B cell (primary cell): ENCODE measurements at regions of chr20 and their contacts with region 1.

Region 1: DNA sequence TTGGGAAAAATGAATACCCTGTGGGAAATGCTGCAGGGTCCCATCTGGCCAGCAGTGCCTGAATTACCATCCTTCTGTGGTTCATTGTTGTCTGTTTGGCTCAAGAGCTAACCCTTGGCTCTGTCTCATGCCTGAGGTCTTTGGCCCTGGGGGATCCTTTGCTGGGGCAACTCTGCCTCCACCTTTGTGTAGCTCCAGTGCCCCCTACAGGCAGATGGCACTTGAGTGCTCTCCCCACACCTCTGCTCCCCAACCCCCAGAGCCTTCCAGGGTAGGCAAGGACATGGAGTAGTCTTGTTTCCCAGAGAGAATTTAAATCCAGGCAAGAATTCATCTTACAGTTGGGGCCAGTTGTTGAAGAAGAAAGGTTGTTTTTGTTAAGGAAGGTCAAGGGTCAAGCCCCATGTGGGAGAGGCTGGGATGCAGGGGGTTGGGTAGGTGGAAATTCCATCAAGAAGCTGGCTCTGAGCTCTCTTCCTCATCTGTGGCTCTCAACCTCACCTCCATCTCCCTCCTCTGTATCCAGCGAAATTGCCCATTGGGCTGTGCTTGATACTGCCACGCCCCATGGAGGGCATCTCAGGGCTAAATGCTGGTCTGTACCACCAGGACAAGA is 44.2 kb downstream of the ZNF831 start:
- DNase-seq: peak; percentile 85
- ATAC-seq: peak; percentile 99
- H3K4me3 ChIP-seq: no peak overlapping the region
- H3K4me3 Mint-ChIP-seq: no peak overlapping the region
- H3K27ac ChIP-seq: no peak overlapping the region
- H3K27ac Mint-ChIP-seq: no peak overlapping the region
- H3K4me1 ChIP-seq: peaks cover 6 to 7% of the 10 kb centered on the region in 2 donors
- H3K4me1 Mint-ChIP-seq: peaks cover 7% of the 10 kb centered on the region
- H3K27me3 ChIP-seq: no peaks in the 10 kb centered on the region
- H3K27me3 Mint-ChIP-seq: no peaks in the 10 kb centered on the region
- CTCF ChIP-seq: peak; percentile 91

Region 2: DNA sequence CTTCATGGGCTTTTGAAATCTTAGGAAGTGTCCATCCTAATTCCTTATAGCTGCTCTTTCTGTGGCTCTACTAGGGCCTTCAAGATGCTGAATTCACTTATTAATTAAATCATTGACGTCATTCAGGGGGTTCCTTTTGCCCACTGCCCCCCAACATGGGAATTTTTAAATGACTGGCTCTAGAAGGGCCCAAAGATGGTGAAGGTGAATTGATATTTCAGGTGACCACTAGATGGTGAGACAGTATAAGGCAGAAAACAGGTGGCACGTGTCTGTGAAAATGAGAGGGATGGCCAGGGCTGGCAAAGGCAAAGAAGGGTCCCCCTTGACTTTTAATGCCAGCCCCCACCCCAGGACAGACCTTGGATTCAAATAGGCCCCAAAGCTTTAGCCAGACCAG is 343.5 kb before region 1 on chr20:
- CTCF ChIA-PET with region 1: interaction called, 58 read pairs
- POLR2A ChIA-PET with region 1: no interaction called
- intact Hi-C with region 1: loop called (anchors 1 kb)
- DNase-seq: peak; percentile 48
- ATAC-seq: no peak
- H3K4me3 ChIP-seq: no peak overlapping the region
- H3K4me3 Mint-ChIP-seq: no peak overlapping the region
- H3K27ac ChIP-seq: no peak overlapping the region
- H3K27ac Mint-ChIP-seq: no peak overlapping the region
- H3K4me1 ChIP-seq: peaks cover 0 to 2% of the 10 kb centered on the region in 2 donors
- H3K4me1 Mint-ChIP-seq: no peaks in the 10 kb centered on the region
- H3K27me3 ChIP-seq: peaks cover 0 to 10% (median 3%) of the 10 kb centered on the region in 4 experiments
- H3K27me3 Mint-ChIP-seq: peaks cover 22% of the 10 kb centered on the region
- CTCF ChIP-seq: peak; percentile 55

Region 3: DNA sequence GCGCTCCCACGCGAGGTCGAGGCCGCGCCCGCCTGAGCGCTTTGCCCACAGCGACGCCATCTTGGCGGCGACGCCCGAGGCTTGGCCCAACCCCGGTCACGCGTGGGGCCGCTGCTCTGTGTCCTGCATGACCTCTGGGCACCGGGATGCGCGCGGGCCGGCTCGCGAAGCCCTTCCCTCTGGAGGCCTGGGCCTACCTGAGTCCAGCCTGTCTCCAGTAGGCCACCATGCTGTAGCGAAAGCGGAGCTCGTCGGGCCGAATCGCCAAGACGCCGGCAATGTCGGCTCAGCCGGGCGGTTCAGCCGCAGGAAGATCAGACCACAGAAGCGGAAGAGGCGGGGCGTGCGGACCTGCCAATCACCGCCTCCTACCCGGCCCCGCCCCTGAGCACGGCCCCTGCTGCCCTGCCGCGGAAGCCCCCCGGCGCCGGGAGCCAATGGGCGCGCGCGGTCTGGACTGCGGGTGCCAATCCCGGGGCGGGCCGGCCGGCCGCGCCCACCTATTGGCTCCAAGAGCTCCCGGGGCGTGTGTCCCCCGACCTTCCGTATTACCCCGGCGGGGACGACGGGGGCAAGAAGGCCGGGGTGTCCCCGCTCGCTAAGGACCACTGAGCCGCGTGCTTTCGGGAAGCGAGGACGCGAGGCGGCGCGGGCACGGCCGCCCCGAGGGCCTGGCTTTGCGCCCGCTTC is 175.7 kb before region 1 on chr20 and contains the start of gene ATP5F1E:
- CTCF ChIA-PET with region 1: interaction called, 10 read pairs
- POLR2A ChIA-PET with region 1: no interaction called
- intact Hi-C with region 1: no loop called
- DNase-seq: peak; percentile 98
- ATAC-seq: peak; percentile 97
- H3K4me3 ChIP-seq: peak within 1 kb of the TSS; percentile 68 to 82 (median 80)
- H3K4me3 Mint-ChIP-seq: peak within 1 kb of the TSS; percentile 97
- H3K27ac ChIP-seq: peak within 1 kb of the TSS; percentile 84 to 91
- H3K27ac Mint-ChIP-seq: peak within 1 kb of the TSS; percentile 98
- H3K4me1 ChIP-seq: peaks cover 27 to 37% of the 10 kb centered on the region in 2 donors
- H3K4me1 Mint-ChIP-seq: peaks cover 45% of the 10 kb centered on the region
- H3K27me3 ChIP-seq: no peaks in the 10 kb centered on the region
- H3K27me3 Mint-ChIP-seq: no peaks in the 10 kb centered on the region
- CTCF ChIP-seq: no peak
- total RNA-seq, gene ATP5F1E: 51.0 and 55.0 TPM in 2 replicates

Region 4: GRCh38 chr20:59094576-59094975 is 113.3 kb before region 1 on chr20:
- CTCF ChIA-PET with region 1: interaction called, 435 read pairs
- POLR2A ChIA-PET with region 1: interaction called, 3 read pairs
- intact Hi-C with region 1: no loop called
- DNase-seq: no peak
- ATAC-seq: no peak
- H3K4me3 ChIP-seq: no peak overlapping the region
- H3K4me3 Mint-ChIP-seq: no peak overlapping the region
- H3K27ac ChIP-seq: no peak overlapping the region
- H3K27ac Mint-ChIP-seq: no peak overlapping the region
- H3K4me1 ChIP-seq: no peaks in the 10 kb centered on the region
- H3K4me1 Mint-ChIP-seq: peaks cover 9% of the 10 kb centered on the region
- H3K27me3 ChIP-seq: no peaks in the 10 kb centered on the region
- H3K27me3 Mint-ChIP-seq: no peaks in the 10 kb centered on the region
- CTCF ChIP-seq: no peak

Region 5: GRCh38 chr20:59120491-59120890 is 87.4 kb before region 1 on chr20:
- CTCF ChIA-PET with region 1: interaction called, 68 read pairs
- POLR2A ChIA-PET with region 1: no interaction called
- intact Hi-C with region 1: no loop called
- DNase-seq: peak; percentile 48
- ATAC-seq: no peak
- H3K4me3 ChIP-seq: no peak overlapping the region
- H3K4me3 Mint-ChIP-seq: peak overlapping the region; percentile 91
- H3K27ac ChIP-seq: no peak overlapping the region
- H3K27ac Mint-ChIP-seq: peak overlapping the region; percentile 98
- H3K4me1 ChIP-seq: peaks cover 58 to 60% of the 10 kb centered on the region in 2 donors
- H3K4me1 Mint-ChIP-seq: peaks cover 68% of the 10 kb centered on the region
- H3K27me3 ChIP-seq: no peaks in the 10 kb centered on the region
- H3K27me3 Mint-ChIP-seq: no peaks in the 10 kb centered on the region
- CTCF ChIP-seq: no peak

Region 6: GRCh38 chr20:59191756-59192532 is 15.9 kb before region 1 on chr20:
- CTCF ChIA-PET with region 1: interaction called, 15 read pairs
- POLR2A ChIA-PET with region 1: no interaction called
- intact Hi-C with region 1: no loop called
- DNase-seq: no peak
- ATAC-seq: no peak
- H3K4me3 ChIP-seq: no peak overlapping the region
- H3K4me3 Mint-ChIP-seq: no peak overlapping the region
- H3K27ac ChIP-seq: no peak overlapping the region
- H3K27ac Mint-ChIP-seq: no peak overlapping the region
- H3K4me1 ChIP-seq: peaks cover 0 to 5% of the 10 kb centered on the region in 2 donors
- H3K4me1 Mint-ChIP-seq: peaks cover 7% of the 10 kb centered on the region
- H3K27me3 ChIP-seq: no peaks in the 10 kb centered on the region
- H3K27me3 Mint-ChIP-seq: no peaks in the 10 kb centered on the region
- CTCF ChIP-seq: no peak

Region 7: GRCh38 chr20:59385480-59385879 is 177.6 kb after region 1 on chr20:
- CTCF ChIA-PET with region 1: no interaction called
- POLR2A ChIA-PET with region 1: no interaction called
- intact Hi-C with region 1: no loop called
- DNase-seq: no peak
- ATAC-seq: no peak
- H3K4me3 ChIP-seq: no peak overlapping the region
- H3K4me3 Mint-ChIP-seq: no peak overlapping the region
- H3K27ac ChIP-seq: no peak overlapping the region
- H3K27ac Mint-ChIP-seq: no peak overlapping the region
- H3K4me1 ChIP-seq: peaks cover 0 to 7% of the 10 kb centered on the region in 2 donors
- H3K4me1 Mint-ChIP-seq: no peaks in the 10 kb centered on the region
- H3K27me3 ChIP-seq: peaks cover 0 to 3% (median 1%) of the 10 kb centered on the region in 4 experiments
- H3K27me3 Mint-ChIP-seq: peaks cover 10% of the 10 kb centered on the region
- CTCF ChIP-seq: no peak